ENCODE measurements at regions of chr13 and their contacts with region 1.

Region 1: GRCh38 chr13:46831588-46832194 is 34.7 kb upstream of the ESD start:
- DNase-seq: peak; percentile 17
- CTCF ChIP-seq: peak; percentile 73

Region 2: GRCh38 chr13:46817095-46817494 is 14.6 kb before region 1 on chr13:
- CTCF ChIA-PET with region 1: interaction called, 12 read pairs
- POLR2A ChIA-PET with region 1: no interaction called
- DNase-seq: no peak
- CTCF ChIP-seq: no peak

Region 3: DNA sequence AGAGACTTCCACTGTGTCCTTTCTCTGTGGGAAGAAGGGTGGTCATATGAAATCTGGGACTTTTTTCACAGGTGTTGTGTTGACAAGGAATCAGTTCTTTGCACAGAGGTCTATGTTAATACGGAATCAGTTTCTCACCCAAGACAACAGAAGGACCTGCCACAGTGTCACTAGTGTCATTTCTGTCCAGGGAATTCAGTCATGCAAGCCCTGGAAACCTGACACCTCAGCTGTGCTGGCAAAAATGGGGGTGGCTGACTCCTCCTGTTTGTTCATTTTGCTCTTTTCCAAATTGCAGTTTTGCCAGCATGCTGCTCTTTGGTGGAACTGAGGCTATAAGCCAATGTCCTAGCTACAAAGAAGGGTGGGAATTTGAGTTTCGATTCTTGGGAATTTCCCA is 15.0 kb after region 1 on chr13:
- CTCF ChIA-PET with region 1: interaction called, 12 read pairs
- POLR2A ChIA-PET with region 1: no interaction called
- DNase-seq: no peak
- CTCF ChIP-seq: no peak

Region 4: DNA sequence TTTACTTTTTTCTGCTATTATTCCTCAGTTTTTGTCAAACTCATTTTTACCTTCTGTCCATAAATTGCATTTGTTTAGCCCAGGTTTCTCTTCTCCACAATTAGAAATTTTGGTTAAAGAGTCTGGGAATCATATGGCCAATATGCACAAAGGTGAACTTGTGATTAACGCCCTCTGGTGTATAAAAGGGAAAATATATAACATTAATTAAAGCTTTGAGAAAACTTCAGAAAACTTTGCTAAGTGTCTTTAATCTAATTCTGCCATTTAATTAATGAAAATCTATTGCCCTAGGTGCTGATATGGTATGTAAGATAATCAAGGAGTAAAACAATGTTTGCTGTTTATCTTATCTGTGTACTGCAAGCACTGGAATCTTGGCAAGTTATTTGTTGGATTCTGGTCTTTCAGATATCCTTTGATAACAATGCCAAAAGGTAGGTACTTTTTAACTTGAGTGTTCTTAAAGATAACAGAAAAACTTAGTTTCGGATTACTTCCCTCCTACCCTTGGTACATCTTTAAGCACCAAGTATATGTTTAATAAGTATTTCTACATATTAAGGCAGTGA is 766.7 kb after region 1 on chr13:
- CTCF ChIA-PET with region 1: interaction called, 11 read pairs
- POLR2A ChIA-PET with region 1: no interaction called
- DNase-seq: no peak
- CTCF ChIP-seq: peak; percentile 22